WTC11 (cell line): ENCODE measurements at regions of chr12 and their contacts with region 1.

Region 1: DNA sequence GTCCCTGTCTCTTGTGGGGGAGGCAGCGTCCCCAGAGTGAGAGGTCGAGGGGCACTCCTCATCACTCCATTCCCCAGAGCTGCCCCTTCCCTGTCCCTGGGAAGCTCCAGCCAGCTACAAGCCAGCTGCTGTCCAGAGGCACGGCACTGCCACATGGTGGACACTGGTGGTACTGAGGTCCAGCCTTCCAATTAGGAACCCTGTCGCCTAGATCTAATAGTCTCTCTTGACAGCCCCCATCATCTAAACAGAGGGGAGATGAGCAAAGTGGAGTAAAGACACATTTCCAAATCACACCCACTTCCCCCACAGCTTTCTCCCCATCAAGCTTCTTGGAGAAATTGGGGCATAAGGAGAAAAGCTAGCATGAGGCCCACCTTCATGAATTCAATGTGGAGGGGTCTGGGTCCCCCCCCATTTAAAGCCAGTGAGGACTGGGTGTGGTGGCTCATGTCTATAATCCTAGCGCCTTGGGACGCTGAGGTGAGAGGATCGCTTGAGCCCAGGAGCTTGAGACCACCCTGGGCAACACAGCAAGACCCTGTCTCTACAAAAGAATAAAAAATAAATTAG is 2.1 kb upstream of the INHBE start:
- DNase-seq: peak; percentile 94
- ATAC-seq: peak; percentile 72
- H3K4me3 Mint-ChIP-seq: no peak overlapping the region
- H3K27ac Mint-ChIP-seq: no peak overlapping the region
- H3K4me1 Mint-ChIP-seq: peaks cover 43% of the 10 kb centered on the region
- H3K27me3 Mint-ChIP-seq: no peaks in the 10 kb centered on the region
- CTCF ChIP-seq: peak; percentile 76

Region 2: GRCh38 chr12:57229634-57230380 is 223.2 kb before region 1 on chr12 and contains the start of gene SHMT2:
- CTCF ChIA-PET with region 1: interaction called, 13 read pairs
- POLR2A ChIA-PET with region 1: interaction called, 10 read pairs
- DNase-seq: peak; percentile 97
- ATAC-seq: peak; percentile 41
- H3K4me3 Mint-ChIP-seq: peak within 1 kb of the TSS; percentile 98
- H3K27ac Mint-ChIP-seq: peak within 1 kb of the TSS; percentile 94
- H3K4me1 Mint-ChIP-seq: peaks cover 49% of the 10 kb centered on the region
- H3K27me3 Mint-ChIP-seq: peaks cover 53% of the 10 kb centered on the region
- CTCF ChIP-seq: no peak
- total RNA-seq, gene SHMT2: 262 to 297 TPM (median 265 TPM) in 3 replicates

Region 3: DNA sequence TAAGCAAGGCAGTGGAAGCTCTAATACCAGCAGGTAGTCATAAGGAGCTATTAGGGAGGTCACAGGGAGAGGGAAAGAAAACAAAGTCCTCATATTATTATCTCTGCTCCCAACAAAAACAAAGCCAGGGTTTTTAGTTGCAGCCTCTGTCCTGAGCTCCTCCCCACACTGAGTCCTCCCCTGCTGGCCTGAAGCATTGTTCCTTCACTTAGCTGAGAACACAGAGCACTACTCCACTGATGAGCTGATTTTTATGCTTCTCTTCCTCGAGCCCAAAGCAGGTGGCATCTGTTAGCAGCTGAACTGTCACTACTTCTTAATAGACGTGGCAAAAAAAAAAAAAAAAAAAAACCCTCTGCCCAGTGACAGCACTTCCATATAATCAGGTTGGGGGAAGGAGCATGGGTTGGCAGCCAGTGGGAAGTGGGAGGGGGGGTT is 191.6 kb before region 1 on chr12:
- CTCF ChIA-PET with region 1: interaction called, 56 read pairs
- POLR2A ChIA-PET with region 1: interaction called, 5 read pairs
- DNase-seq: no peak
- ATAC-seq: peak; percentile 73
- H3K4me3 Mint-ChIP-seq: no peak overlapping the region
- H3K27ac Mint-ChIP-seq: no peak overlapping the region
- H3K4me1 Mint-ChIP-seq: peaks cover 12% of the 10 kb centered on the region
- H3K27me3 Mint-ChIP-seq: no peaks in the 10 kb centered on the region
- CTCF ChIP-seq: no peak

Region 4: GRCh38 chr12:57299514-57300016 is 153.5 kb before region 1 on chr12:
- CTCF ChIA-PET with region 1: interaction called, 72 read pairs
- POLR2A ChIA-PET with region 1: no interaction called
- DNase-seq: no peak
- ATAC-seq: peak; percentile 62; the same call in 1 of the 2 replicates
- H3K4me3 Mint-ChIP-seq: no peak overlapping the region
- H3K27ac Mint-ChIP-seq: peak overlapping the region; percentile 32
- H3K4me1 Mint-ChIP-seq: peaks cover 15% of the 10 kb centered on the region
- H3K27me3 Mint-ChIP-seq: no peaks in the 10 kb centered on the region
- CTCF ChIP-seq: no peak

Region 5: GRCh38 chr12:57340104-57340503 is 112.9 kb before region 1 on chr12:
- CTCF ChIA-PET with region 1: interaction called, 38 read pairs
- POLR2A ChIA-PET with region 1: interaction called, 3 read pairs
- DNase-seq: no peak
- ATAC-seq: no peak
- H3K4me3 Mint-ChIP-seq: no peak overlapping the region
- H3K27ac Mint-ChIP-seq: no peak overlapping the region
- H3K4me1 Mint-ChIP-seq: peaks cover 25% of the 10 kb centered on the region
- H3K27me3 Mint-ChIP-seq: no peaks in the 10 kb centered on the region
- CTCF ChIP-seq: no peak

Region 6: DNA sequence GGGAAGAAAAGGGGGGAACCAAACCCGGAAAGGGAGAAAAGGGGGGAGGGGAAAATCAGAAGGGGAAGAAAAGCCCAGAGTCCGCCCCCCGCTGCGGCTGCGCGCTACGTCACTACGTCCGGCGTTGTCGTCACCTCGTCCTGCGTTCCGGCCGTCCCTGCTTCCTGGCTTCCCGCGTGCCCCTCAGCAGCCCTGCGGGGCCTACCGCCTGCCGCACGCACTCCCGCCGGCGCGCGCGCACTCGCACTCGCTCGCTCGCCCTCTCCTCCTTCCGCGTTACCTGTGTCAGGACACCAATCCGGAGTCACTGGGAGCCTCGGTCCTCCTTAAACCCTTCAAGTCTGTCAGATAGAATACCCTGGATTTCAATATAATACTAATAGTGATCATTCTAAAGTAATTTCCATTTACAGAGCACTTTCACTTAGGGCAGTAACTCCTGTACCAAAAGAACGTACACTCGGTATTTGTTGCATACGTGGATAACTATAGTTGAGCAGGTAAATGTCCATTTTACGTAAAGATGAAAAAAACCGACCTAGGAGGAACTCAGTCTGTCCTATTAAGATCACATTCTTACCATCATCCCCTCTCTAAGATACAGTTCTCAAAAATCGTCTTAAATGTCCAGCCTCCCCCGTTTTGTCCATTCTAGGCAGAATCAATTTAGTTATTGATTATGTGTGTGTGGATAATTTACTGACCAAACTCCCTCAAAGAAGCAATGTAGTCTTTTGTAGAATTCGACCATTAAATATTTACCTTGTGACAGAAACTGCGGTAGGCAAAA is 21.9 kb before region 1 on chr12 and contains the start of gene R3HDM2:
- CTCF ChIA-PET with region 1: interaction called, 23 read pairs
- POLR2A ChIA-PET with region 1: interaction called, 8 read pairs
- DNase-seq: peak; percentile 95
- ATAC-seq: peak; percentile 92
- H3K4me3 Mint-ChIP-seq: peak within 1 kb of the TSS; percentile 88
- H3K27ac Mint-ChIP-seq: peak within 1 kb of the TSS; percentile 96
- H3K4me1 Mint-ChIP-seq: peaks cover 25% of the 10 kb centered on the region
- H3K27me3 Mint-ChIP-seq: no peaks in the 10 kb centered on the region; the same call in 1 of the 2 replicates
- CTCF ChIP-seq: no peak
- total RNA-seq, gene R3HDM2: 34.7 to 39.8 TPM (median 37.5 TPM) in 3 replicates

Region 7: GRCh38 chr12:57553343-57554202 is 100.5 kb after region 1 on chr12:
- CTCF ChIA-PET with region 1: no interaction called
- POLR2A ChIA-PET with region 1: no interaction called
- DNase-seq: no peak
- ATAC-seq: no peak
- H3K4me3 Mint-ChIP-seq: no peak overlapping the region
- H3K27ac Mint-ChIP-seq: no peak overlapping the region
- H3K4me1 Mint-ChIP-seq: peaks cover 33% of the 10 kb centered on the region
- H3K27me3 Mint-ChIP-seq: peaks cover 10% of the 10 kb centered on the region
- CTCF ChIP-seq: no peak